Heart left ventricle (tissue), 16 donors: ENCODE measurements at regions of chr2 and their contacts with region 1.

Region 1: GRCh38 chr2:109318150-109318948 is 189.3 kb downstream of the SH3RF3 start:
- DNase-seq: peak; percentile 59 to 90 (median 80)
- ATAC-seq: peak; percentile 40 to 76 (median 70)
- H3K4me3 ChIP-seq: peak overlapping the region in 7 of 12 donors; percentile 7 to 28 (median 14)
- H3K27ac ChIP-seq: peak overlapping the region; percentile 58 to 81 (median 74)
- H3K4me1 ChIP-seq: peaks cover 22 to 61% (median 46%) of the 10 kb centered on the region in 12 donors
- H3K27me3 ChIP-seq: no peaks in the 10 kb centered on the region
- CTCF ChIP-seq: peak in 7 of 12 donors; percentile 12 to 45 (median 14)
- POLR2A ChIP-seq: no peak

Region 2: GRCh38 chr2:108971661-108972566 is 346.4 kb before region 1 on chr2:
- intact Hi-C with region 1: no loop called
- DNase-seq: peak in 2 of 5 donors; percentile 37 to 65
- ATAC-seq: peak in 3 of 4 donors; percentile 48 to 88 (median 65)
- H3K4me3 ChIP-seq: no peak overlapping the region
- H3K27ac ChIP-seq: no peak overlapping the region
- H3K4me1 ChIP-seq: no peaks in the 10 kb centered on the region
- H3K27me3 ChIP-seq: no peaks in the 10 kb centered on the region
- CTCF ChIP-seq: no peak
- POLR2A ChIP-seq: no peak

Region 3: DNA sequence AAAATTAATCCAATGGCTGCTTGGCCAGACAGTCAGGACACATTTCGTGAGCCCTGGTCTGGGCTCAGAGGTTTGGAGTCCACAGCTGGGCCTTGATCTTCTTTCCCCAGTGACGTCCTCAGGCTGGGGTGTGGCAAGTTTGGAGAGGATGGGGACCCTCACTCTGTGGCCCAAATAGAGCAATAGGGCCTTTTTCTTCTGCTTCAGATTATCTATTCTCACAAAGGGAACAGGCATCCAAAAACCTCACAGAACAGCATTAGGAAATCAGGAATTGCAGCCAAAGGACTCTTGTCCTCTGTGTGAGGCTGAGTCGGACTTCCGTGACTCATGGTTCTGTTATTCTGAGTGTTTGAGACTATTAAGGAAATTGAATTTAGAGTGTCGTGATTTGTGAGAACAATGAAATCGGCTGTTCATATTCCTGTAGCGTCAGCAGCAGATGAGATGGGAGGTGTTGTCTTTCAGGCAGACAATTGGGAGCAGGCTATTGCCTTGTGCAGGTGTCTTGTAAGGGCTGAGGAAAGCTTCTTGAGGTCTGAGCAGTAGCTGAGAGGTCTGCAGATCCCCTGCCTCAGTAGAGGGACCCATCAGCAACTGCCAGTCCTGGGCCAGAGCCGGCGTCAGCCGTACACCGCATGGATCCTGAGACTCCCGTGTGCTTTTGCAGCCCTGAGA is 75.6 kb before region 1 on chr2:
- intact Hi-C with region 1: loop called in 1 of 10 experiments (anchors 5 kb)
- DNase-seq: peak in 1 of 5 donors; percentile 50
- ATAC-seq: peak in 3 of 4 donors; percentile 52 to 83 (median 64)
- H3K4me3 ChIP-seq: no peak overlapping the region
- H3K27ac ChIP-seq: peak overlapping the region; percentile 40 to 92 (median 80)
- H3K4me1 ChIP-seq: peaks cover 17 to 80% (median 56%) of the 10 kb centered on the region in 12 donors
- H3K27me3 ChIP-seq: no peaks in the 10 kb centered on the region
- CTCF ChIP-seq: no peak
- POLR2A ChIP-seq: no peak

Region 4: GRCh38 chr2:109260886-109261700 is 57.3 kb before region 1 on chr2:
- intact Hi-C with region 1: loop called in 1 of 10 experiments (anchors 5 kb)
- DNase-seq: peak in 1 of 5 donors; percentile 13
- ATAC-seq: peak in 3 of 4 donors; percentile 15 to 24 (median 23)
- H3K4me3 ChIP-seq: no peak overlapping the region
- H3K27ac ChIP-seq: no peak overlapping the region
- H3K4me1 ChIP-seq: peaks cover 7 to 54% (median 38%) of the 10 kb centered on the region in 12 donors
- H3K27me3 ChIP-seq: no peaks in the 10 kb centered on the region
- CTCF ChIP-seq: peak in 10 of 12 donors; percentile 10 to 36 (median 16)
- POLR2A ChIP-seq: no peak

Region 5: DNA sequence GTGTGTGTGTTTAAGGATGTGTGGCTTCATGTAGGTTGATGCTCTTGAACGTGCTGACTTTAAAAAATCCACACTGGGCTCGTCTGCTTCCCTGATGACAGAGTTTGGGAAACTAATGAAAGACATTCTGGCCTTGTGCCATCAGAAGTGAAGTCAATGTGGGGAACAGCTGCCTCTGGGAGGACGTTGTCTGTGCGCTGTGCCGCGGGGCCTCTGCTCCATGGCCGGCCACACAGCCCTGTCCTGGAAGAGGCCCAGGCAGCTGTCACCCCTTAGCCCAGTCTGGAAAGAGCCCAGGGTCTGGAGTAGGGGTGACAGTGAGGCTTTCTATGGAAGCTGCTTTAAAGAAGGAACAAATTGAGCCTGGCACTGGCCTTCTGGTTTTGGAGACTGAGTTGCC is 33.5 kb before region 1 on chr2:
- intact Hi-C with region 1: loop called in 1 of 10 experiments (anchors 5 kb)
- DNase-seq: peak; percentile 53 to 78 (median 72)
- ATAC-seq: peak; percentile 70 to 90 (median 80)
- H3K4me3 ChIP-seq: no peak overlapping the region
- H3K27ac ChIP-seq: peak overlapping the region in 3 of 12 donors; percentile 6 to 48 (median 24)
- H3K4me1 ChIP-seq: peaks cover 7 to 52% (median 31%) of the 10 kb centered on the region in 12 donors
- H3K27me3 ChIP-seq: no peaks in the 10 kb centered on the region
- CTCF ChIP-seq: no peak
- POLR2A ChIP-seq: no peak

Region 6: DNA sequence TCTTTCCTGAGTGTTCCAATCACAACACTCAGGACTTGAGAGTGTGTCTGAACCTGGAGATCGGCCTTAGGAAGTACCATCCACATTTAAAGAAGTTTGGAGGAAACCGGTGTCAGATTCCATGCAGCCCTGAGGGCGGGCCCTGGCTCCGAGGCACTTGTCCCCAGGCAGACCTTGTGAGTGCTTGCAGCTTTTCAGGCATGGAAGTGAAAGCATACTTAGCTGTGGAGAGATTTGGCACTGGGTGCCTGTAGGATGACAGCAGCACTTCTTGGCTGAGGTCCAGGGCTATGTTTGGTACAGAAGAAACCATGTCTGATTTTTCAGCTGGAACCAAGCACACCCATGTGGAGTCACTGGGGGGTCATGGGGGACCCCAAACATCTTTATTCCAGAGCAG is 64.6 kb after region 1 on chr2:
- intact Hi-C with region 1: loop called in 2 of 10 experiments (anchors 5 kb)
- DNase-seq: peak; percentile 66 to 90 (median 85)
- ATAC-seq: peak; percentile 92 to 95 (median 92)
- H3K4me3 ChIP-seq: no peak overlapping the region
- H3K27ac ChIP-seq: peak overlapping the region in 6 of 12 donors; percentile 29 to 66 (median 46)
- H3K4me1 ChIP-seq: peaks cover 7 to 40% (median 26%) of the 10 kb centered on the region in 12 donors
- H3K27me3 ChIP-seq: no peaks in the 10 kb centered on the region
- CTCF ChIP-seq: no peak
- POLR2A ChIP-seq: no peak